Heart left ventricle (tissue), 16 donors: ENCODE measurements at regions of chr12 and their contacts with region 1.

Region 1: DNA sequence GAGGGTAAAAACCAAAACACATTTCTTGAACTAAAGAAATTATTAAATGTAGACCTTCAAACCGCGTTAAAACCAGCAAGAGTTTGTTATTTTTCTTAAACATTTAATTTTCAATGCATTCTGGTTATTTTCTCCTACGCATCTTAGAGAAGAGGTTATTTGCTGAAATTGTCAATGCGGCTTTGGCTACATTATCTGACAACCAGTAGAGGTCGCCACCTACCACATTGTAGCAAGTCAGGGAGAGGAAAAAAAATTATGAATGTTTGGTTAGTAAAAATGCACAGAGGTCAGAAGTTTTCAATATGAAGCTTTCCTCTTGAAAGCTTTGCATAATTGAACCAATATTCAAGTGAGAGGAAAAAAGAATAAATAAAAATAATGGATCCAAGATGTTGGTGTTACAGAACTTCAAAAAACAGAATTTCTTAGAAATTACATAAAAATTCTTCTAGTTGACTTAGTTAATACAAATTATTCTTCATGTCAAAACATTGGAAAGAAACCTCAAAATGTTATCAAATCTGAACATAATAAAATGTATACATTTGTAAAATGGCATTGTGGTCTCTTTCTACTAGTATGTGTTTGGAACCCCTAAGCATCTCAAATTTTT is 159.4 kb upstream of the TMTC2 start:
- DNase-seq: peak in 1 of 5 donors; percentile 17
- ATAC-seq: no peak
- H3K4me3 ChIP-seq: no peak overlapping the region
- H3K27ac ChIP-seq: no peak overlapping the region
- H3K4me1 ChIP-seq: no peaks in the 10 kb centered on the region
- H3K27me3 ChIP-seq: no peaks in the 10 kb centered on the region
- CTCF ChIP-seq: peak; percentile 60 to 89 (median 80)
- POLR2A ChIP-seq: no peak

Region 2: DNA sequence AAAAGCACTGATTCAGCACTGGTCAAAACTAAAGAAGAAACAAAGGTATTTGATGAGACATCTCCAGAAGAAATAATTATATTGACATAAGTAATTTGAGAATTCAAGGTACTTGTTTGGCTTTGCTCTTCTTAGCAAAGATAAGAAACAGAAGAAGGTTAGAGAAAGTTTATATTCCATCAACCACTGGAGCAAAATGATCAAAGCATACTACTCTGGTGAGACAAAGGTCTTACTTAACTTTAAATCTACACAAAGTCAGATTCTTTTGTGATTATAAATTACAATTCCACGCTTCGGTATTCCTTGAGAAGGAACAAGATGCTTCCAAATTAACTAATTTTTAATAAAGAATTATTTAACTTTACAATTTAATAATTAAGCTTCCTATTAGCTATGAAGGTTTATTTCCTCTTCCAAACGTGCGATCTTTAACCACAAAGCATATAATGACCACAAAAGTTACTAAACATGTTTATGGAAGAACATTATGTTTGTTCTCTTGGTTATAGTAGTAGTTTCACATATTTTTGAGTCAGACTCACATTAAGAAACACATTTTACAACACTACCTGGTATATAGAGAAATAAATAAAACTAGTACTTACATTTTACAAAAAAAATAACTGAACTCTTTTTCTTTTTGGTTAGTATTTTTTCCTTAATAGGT is 115.6 kb before region 1 on chr12:
- intact Hi-C with region 1: no loop called
- DNase-seq: no peak
- ATAC-seq: no peak
- H3K4me3 ChIP-seq: no peak overlapping the region
- H3K27ac ChIP-seq: no peak overlapping the region
- H3K4me1 ChIP-seq: no peaks in the 10 kb centered on the region
- H3K27me3 ChIP-seq: no peaks in the 10 kb centered on the region
- CTCF ChIP-seq: no peak
- POLR2A ChIP-seq: no peak

Region 3: DNA sequence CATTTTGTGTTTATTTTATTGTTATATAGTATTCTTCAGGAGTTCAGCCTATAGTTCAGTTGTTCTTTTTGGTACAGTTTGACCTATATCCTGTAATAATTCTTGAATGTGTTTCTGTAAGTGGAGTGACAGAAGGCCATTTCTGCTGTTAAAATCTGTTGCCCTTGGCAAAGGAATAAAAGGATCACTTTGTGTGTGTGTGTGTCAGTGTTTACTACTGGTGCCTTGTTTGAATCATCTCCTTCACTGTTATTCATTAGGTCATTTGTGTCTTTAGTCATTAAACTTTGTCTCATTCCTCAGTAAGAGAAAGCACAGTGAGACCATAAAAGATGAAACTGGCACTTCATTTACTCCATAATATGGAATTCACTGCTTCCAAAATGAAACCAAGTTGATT is 290.1 kb after region 1 on chr12:
- intact Hi-C with region 1: no loop called
- DNase-seq: no peak
- ATAC-seq: no peak
- H3K4me3 ChIP-seq: no peak overlapping the region
- H3K27ac ChIP-seq: no peak overlapping the region
- H3K4me1 ChIP-seq: no peaks in the 10 kb centered on the region
- H3K27me3 ChIP-seq: no peaks in the 10 kb centered on the region
- CTCF ChIP-seq: no peak
- POLR2A ChIP-seq: no peak

Region 4: DNA sequence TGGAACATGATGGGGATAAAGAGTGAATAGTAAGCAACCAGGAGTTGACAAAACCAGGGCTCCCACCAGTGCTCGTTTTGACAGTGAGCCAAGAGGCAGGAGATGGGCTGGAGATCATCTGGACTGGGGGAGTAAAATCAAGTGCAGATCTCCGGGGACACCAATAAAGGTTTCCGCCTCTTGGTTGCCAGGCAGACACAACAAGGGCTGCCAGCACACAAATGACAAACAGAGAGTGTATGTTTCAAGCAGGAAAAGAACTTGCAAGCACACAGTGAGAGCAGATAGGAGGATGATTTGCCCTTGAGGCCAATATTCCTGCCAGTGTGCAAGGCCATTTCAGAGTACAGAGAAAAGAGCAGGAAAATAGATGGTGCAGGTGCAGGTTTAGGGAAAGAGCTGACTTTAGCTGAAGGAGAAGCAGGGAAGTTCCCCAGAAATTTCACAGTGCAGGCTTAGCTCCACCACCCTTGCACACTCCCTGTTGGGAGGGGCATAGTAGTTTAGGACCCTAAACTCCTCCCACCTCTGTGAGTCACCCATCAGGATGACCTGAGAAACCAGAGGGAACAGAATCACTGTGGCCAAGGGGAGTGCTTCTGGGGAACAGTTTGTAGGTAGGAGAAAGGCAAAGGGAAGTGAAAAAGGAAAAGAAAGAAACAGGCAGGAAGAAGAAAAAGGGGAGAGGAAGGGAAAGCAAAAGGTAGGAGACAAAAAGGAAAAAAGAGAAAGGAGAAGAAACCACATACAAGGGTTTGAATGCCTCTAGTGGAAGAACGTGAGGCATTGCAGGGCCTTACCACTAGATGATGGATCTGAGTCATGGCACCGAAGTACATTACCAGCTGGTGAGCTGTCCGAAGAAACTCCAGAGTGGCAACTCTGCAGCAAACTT is 1980.9 kb after region 1 on chr12:
- intact Hi-C with region 1: loop called in 1 of 10 experiments (anchors 5 kb)
- DNase-seq: peak in 1 of 5 donors; percentile 45
- ATAC-seq: peak; percentile 72 to 91 (median 86)
- H3K4me3 ChIP-seq: peak overlapping the region in 2 of 12 donors; percentile 3 to 17
- H3K27ac ChIP-seq: peak overlapping the region in 8 of 12 donors; percentile 1 to 53 (median 29)
- H3K4me1 ChIP-seq: peaks cover 0 to 11% (median 0%) of the 10 kb centered on the region in 12 donors
- H3K27me3 ChIP-seq: no peaks in the 10 kb centered on the region
- CTCF ChIP-seq: peak in 3 of 12 donors; percentile 18 to 45 (median 39)
- POLR2A ChIP-seq: no peak